Left colon (tissue), 2 donors: ENCODE measurements at regions of chr13 and their contacts with region 1.

Region 1: DNA sequence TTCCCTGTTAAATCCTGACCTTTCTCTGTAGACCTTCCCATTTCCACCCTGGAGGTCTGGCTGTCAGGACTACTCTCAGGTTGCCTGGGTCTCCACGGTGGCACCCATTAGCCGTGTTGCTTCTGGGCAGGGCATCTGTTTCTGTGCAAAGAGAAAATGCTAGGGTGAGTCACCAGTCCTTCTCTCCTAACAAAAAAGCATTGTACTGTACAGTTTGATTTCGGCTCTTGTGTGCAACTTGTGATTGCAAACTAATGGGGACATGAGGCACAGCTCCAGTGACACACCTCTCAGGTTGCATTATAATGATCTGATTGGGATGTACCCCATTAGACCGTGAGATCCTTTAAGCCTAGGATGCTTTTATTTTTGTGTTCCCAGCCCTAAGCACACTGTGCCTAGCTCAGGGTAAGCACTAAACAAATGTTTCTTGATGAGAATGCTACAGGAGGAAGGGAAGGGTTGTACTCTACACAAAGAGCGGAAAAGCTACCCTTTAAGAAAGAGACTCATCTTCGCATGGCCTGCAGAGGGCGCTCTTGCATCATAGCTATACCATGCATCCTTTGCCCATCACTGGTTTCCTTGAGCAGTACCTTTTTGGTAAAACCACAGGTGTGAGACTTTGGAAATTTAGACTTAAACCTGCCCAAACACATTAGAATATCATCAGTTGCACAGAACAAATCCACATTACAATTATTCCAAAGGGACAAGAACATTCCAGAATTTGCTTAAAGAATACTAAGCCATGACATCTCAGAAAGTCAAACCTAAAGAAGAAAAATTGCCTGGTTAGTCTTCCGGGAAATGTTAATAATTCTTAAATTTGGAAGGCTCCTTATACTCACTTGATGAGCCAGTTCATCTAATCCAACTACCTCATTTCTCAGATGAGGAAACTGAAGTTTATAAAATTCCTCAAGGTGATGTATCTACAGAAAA is 20.3 kb upstream of the TRIM13 start:
- DNase-seq: peak; percentile 49 to 82
- ATAC-seq: peak; percentile 80

Region 2: DNA sequence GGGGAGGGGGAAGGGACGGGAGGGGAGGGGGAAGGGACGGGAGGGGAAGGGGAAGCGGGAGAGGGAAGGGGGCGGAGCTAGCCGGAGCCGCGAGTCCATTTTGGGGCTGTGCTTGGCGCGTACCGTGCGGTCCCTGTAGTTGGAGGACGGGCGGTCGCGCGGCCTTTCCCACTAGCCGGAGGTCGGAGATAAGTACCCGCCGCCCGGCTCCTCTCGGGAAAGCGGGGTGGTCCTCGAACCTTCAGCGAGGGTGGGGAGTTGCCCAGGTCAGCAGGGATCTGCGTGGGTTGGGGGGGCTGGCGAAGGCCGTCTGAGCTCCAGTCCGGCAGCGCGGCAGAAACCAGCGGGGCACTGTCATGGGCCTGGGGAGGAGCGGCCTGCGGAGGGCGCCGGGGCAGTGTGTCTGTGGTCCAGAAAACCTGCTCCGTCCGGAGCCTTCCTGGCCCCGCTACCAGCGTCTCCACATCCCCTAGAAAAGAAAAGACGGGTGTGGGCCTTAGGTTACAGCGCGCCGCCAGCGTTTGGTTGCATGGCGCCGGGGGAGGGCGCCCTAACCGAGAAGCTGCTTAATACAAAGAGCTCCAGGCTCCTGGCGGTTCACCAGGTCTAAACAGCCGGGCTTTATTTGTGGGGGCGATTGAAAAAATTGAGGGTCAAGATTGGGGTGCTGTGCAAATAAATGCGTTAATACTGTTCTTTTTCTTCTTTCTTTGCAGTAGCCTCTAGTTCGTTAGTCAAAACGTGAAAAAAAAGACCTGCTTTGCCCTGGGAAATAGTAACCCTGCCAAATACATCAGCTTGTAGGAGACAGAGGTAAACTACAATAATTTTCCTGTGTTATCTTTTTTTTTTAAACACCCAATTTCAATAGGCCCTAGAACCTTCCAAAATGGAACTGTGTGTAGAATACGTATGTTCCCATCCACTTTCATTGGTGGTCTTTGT is 20.6 kb after region 1 on chr13 and contains the start of gene TRIM13:
- intact Hi-C with region 1: no loop called
- DNase-seq: peak; percentile 90 to 94
- ATAC-seq: peak; percentile 79
- total RNA-seq, gene TRIM13: 26.0 to 32.8 TPM

Region 3: GRCh38 chr13:50170447-50171037 is 194.0 kb after region 1 on chr13:
- intact Hi-C with region 1: no loop called
- DNase-seq: no peak
- ATAC-seq: no peak

Region 4: DNA sequence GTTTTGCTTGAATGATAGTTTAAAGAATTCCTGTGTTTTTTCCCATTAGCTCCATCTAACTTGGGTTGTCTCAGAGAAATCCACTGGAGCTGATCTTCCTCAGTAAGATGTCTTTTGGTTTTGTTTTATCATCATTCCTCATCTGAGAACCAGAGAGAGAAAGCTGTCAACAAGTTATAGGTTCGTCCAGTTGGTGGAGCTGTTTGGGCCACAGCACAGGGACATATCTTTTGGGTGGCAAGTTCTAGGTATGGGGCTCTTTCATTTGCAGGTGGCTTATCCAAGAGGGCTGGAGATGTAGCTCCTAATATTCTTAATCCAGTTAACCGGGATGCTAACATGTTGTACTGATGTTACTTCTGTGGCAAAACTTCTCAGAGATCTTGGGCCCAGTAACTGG is 212.9 kb after region 1 on chr13:
- intact Hi-C with region 1: no loop called
- DNase-seq: no peak
- ATAC-seq: no peak

Region 5: GRCh38 chr13:51066091-51066831 is 1089.7 kb after region 1 on chr13:
- intact Hi-C with region 1: loop called in 1 of 2 experiments (anchors 10 kb)
- DNase-seq: no peak
- ATAC-seq: no peak

Region 6: DNA sequence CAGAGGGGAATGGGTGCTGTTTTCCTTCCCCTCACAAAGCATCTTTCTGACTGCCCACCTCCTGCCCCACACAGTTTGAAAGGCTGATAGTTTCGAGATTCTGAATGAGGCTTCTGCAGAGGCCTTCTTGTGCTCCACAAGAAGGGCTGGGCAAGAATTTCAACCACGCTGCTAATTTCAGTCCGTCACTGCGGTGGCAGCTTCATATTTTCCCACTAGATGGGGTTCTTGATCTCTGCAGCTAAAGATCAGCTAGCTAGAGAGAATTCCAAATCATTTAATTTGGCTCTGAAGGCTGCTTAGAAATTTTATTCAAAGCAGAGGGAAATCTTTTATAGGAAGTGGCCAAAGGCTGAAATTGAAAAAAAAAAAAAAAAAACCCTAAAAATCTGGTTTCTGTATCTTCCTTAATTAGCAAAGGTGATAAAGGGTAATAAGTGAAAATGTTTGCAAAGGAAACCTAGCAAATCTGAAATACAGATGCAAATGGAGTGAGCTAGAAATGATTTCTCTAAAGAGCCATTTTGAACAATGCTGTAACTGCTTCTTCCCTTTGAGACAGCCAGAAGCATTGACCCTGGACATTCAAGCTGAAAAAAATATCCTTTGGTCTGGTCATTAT is 1172.5 kb after region 1 on chr13:
- intact Hi-C with region 1: no loop called
- DNase-seq: no peak
- ATAC-seq: peak; percentile 31